MCF 10A (cell line): ENCODE measurements at regions of chr11 and their contacts with region 1.

Region 1: GRCh38 chr11:119067371-119068222 is at the start of gene VPS11:
- DNase-seq: peak; percentile 95
- H3K4me3 Mint-ChIP-seq: peak within 1 kb of the TSS; percentile 87
- H3K27ac Mint-ChIP-seq: peak within 1 kb of the TSS; percentile 76
- H3K4me1 Mint-ChIP-seq: peaks cover 7% of the 10 kb centered on the region
- H3K27me3 Mint-ChIP-seq: no peaks in the 10 kb centered on the region
- CTCF ChIP-seq: no peak
- total RNA-seq, gene VPS11: 16.2 and 21.8 TPM in 2 replicates

Region 2: DNA sequence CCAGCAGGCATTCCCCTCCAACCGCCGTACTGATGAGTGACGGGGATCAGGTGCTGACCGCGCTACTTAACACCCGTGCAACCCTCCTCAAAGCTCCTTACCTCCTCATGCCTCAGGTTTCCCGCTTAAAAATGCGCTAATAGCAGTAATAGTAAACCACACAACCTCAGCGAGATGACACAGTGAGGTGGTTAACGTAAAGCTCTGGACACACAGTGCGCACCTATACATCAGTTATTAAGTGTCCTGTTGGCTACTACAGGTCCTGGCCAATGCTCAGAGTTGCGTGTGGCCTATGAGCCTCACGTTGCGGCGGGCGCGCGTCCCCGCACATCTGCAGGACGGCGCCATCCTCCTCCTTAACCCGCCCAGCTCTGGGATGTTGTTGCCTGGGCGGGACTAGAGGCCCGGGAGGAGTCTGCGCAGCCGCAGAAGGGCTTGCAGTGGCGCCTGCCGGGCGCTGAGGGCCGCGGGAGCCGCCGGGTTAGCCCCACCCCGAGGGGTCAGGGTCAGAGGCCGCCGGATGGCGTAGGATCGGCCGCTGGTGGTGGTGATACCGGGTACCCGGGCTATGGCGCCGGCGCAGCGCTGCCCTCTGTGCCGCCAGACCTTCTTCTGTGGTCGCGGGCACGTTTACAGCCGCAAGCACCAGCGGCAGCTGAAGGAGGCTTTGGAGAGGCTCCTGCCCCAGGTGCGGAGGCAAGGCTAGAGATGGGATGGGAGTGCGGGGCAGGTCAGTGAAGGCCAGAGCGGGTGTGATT is 69.8 kb before region 1 on chr11 and contains the start of gene CENATAC:
- CTCF ChIA-PET with region 1: no interaction called
- POLR2A ChIA-PET with region 1: interaction called, 19 read pairs
- intact Hi-C with region 1: no loop called
- DNase-seq: peak; percentile 91
- H3K4me3 Mint-ChIP-seq: peak within 1 kb of the TSS; percentile 95
- H3K27ac Mint-ChIP-seq: peak within 1 kb of the TSS; percentile 70
- H3K4me1 Mint-ChIP-seq: peaks cover 5% of the 10 kb centered on the region
- H3K27me3 Mint-ChIP-seq: no peaks in the 10 kb centered on the region
- CTCF ChIP-seq: no peak
- total RNA-seq, gene CENATAC: 48.0 and 49.0 TPM in 2 replicates

Region 3: DNA sequence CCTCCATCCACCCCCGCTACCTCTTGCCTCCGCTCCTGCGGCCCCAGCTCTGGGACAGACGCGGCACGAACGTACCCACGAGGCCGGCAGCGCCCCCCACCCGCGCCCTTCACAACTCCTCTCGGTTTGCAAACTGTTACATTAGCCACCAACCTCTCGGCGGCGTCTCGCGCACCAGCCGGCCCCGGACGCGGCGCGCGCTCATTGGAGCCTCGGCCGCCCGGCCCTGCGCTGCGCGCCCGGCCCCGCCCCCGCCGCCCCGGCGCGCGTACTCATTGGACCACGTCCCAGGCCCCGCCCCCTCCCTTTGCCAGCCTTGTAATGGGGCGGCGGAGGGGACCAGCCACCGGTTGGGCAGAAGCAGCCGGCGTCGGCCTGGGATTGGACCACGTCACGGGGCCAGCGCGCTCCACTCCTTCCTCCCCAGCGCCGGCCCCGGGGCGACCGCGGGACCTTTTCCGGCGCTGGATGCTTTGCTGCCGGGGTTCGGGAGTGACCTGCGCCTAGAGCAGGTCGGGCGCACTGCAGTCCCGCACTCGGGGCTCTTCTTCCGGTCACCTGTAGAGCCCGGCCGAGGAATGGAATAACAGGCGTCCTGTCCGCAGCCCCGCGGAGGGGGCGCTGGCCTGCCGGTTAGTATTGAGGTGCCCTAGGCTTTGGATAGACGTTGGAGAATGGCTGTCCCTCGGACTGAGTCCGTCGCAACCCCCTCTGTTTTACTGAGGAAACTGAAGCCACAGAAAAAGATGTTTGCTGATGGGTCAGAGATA is 10.4 kb before region 1 on chr11 and contains the start of gene HYOU1:
- CTCF ChIA-PET with region 1: no interaction called
- POLR2A ChIA-PET with region 1: interaction called, 44 read pairs
- intact Hi-C with region 1: no loop called
- DNase-seq: peak; percentile 97
- H3K4me3 Mint-ChIP-seq: peak within 1 kb of the TSS; percentile 96
- H3K27ac Mint-ChIP-seq: peak within 1 kb of the TSS; percentile 98
- H3K4me1 Mint-ChIP-seq: peaks cover 19% of the 10 kb centered on the region
- H3K27me3 Mint-ChIP-seq: no peaks in the 10 kb centered on the region
- CTCF ChIP-seq: peak; percentile 29
- total RNA-seq, gene HYOU1: 398 and 664 TPM in 2 replicates

Region 4: DNA sequence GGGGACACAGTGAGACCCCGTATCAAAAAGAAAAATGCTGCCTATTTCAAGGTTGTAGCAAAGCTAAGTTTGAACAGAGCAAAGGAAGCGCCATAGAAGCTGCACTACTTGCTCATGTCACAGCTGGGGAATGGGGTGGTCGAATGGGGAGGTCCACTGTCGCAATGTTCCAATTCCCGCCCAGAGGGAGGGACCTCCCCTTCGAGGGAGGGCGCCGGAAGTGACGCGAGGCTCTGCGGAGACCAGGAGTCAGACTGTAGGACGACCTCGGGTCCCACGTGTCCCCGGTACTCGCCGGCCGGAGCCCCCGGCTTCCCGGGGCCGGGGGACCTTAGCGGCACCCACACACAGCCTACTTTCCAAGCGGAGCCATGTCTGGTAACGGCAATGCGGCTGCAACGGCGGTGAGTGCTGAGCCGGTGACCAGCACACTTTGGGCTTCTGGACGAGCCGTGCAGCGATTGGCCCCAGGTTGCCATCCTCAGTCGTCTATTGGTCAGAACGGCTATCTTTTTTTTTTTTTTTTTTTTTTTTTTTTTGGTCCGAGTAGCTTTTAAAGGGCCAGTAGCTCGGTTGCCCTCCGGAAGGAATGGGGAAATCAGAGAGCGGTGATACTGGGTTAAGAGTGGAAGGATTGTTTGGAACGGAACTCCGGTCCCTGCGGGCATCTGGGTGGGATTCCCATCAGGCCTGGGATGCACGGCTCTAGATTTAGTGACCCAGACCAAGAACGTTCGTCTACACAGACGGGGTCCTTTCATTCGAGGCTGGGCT is 17.3 kb after region 1 on chr11 and contains the start of gene HMBS:
- CTCF ChIA-PET with region 1: interaction called, 5 read pairs
- POLR2A ChIA-PET with region 1: interaction called, 40 read pairs
- intact Hi-C with region 1: no loop called
- DNase-seq: peak; percentile 93
- H3K4me3 Mint-ChIP-seq: peak within 1 kb of the TSS; percentile 94
- H3K27ac Mint-ChIP-seq: peak within 1 kb of the TSS; percentile 81
- H3K4me1 Mint-ChIP-seq: peaks cover 10% of the 10 kb centered on the region
- H3K27me3 Mint-ChIP-seq: no peaks in the 10 kb centered on the region
- CTCF ChIP-seq: no peak
- total RNA-seq, gene HMBS: 38.4 and 51.3 TPM in 2 replicates

Region 5: GRCh38 chr11:119095066-119095880 is 27.7 kb after region 1 on chr11:
- CTCF ChIA-PET with region 1: no interaction called
- POLR2A ChIA-PET with region 1: interaction called, 41 read pairs
- intact Hi-C with region 1: loop called (anchors 2 kb)
- DNase-seq: peak; percentile 100
- H3K4me3 Mint-ChIP-seq: peak overlapping the region; percentile 89
- H3K27ac Mint-ChIP-seq: peak overlapping the region; percentile 89
- H3K4me1 Mint-ChIP-seq: peaks cover 26% of the 10 kb centered on the region
- H3K27me3 Mint-ChIP-seq: no peaks in the 10 kb centered on the region
- CTCF ChIP-seq: peak; percentile 1

Region 6: DNA sequence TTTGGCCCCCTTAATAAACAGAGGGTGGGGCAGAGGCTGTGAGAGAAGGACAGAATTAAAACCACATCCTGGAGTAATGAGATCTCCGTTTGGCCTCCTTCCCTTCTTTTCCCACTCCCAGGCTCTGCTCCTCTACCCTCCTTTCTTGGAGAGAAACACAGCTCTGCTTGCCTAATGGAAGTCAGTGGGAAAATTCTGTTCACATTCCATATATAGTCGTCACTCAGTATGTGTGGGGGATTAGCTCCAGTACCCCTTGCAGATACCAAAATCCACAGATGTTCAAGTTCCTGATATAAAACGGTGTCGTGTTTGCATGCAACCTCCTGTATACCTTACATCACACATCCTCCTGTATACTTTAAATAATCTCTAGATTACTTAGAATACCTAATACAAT is 393.0 kb after region 1 on chr11:
- CTCF ChIA-PET with region 1: no interaction called
- POLR2A ChIA-PET with region 1: no interaction called
- intact Hi-C with region 1: no loop called
- DNase-seq: peak; percentile 5
- H3K4me3 Mint-ChIP-seq: no peak overlapping the region
- H3K27ac Mint-ChIP-seq: no peak overlapping the region
- H3K4me1 Mint-ChIP-seq: no peaks in the 10 kb centered on the region
- H3K27me3 Mint-ChIP-seq: no peaks in the 10 kb centered on the region
- CTCF ChIP-seq: no peak